Left lung (tissue), 14 donors: ENCODE measurements at regions of chr17 and their contacts with region 1.

Region 1: DNA sequence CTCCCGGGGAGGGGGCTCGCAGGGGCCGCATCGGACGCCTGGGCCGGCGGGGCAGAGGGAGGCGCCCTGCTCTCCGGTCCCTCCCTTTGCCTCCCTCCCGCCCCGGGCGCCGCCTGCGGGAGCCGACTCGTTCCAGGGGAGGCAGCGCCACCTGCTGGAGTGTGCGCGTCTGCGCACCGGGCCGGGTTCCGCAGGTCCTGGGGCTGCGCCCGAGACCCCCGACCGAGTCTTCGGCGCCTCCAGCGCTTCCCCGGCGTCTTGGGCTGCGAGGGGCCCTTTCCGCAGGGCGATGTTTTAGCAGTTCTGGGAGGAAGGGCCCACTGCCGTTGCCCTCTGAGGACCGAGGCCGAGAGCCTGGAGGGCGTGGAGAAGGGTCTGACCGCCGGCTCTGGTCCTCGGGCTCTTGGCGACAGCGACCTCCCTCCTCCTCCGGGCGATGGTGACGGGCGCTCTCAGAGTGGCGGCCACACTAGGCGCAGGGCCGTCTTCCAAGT is 106.3 kb downstream of the SEC14L1 start:
- DNase-seq: peak; percentile 82 to 97 (median 89)
- ATAC-seq: peak; percentile 99
- H3K4me3 ChIP-seq: peak overlapping the region; percentile 44 to 52
- H3K27ac ChIP-seq: peak overlapping the region in 1 of 2 donors; percentile 37
- H3K4me1 ChIP-seq: peaks cover 5 to 12% of the 10 kb centered on the region in 2 donors
- H3K27me3 ChIP-seq: peaks cover 0 to 11% of the 10 kb centered on the region in 2 donors
- CTCF ChIP-seq: peak; percentile 97 to 98

Region 2: DNA sequence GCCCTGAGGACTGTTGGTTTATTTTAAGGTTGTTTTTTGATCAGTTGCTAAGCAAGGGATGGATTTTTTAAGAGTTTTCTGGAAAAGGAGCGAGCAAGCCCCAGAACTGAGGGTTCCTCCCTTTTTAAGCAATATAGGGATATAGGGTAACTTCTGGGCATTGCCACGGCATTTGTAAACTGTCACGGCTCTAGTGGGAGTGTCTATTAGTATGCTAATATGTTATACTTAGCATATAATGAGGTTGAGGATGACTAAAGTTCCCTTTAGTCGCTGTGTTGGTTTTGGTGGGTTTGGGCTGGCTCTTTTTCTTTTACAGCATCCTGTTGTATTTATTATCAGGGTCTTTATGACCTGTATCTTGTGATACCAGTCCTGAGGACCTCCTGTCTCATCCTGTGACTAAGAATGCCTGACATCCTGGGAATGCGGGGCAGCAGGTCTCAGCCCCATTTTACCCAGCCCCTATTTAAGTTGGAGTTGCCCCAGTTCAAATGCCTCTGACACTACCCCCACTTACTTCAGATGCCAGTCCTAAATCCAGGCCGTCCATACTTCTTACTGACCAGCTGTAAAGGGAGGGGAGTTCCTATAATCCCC is 449.8 kb before region 1 on chr17:
- intact Hi-C with region 1: no loop called
- DNase-seq: no peak
- ATAC-seq: no peak
- H3K4me3 ChIP-seq: no peak overlapping the region
- H3K27ac ChIP-seq: no peak overlapping the region
- H3K4me1 ChIP-seq: no peaks in the 10 kb centered on the region
- H3K27me3 ChIP-seq: no peaks in the 10 kb centered on the region
- CTCF ChIP-seq: no peak

Region 3: GRCh38 chr17:77088455-77089123 is 158.5 kb before region 1 on chr17:
- intact Hi-C with region 1: loop called in 1 of 2 experiments (anchors 5 kb)
- DNase-seq: peak; percentile 91 to 98 (median 95)
- ATAC-seq: peak; percentile 91
- H3K4me3 ChIP-seq: peak overlapping the region; percentile 73 to 75
- H3K27ac ChIP-seq: peak overlapping the region; percentile 83 to 89
- H3K4me1 ChIP-seq: peaks cover 7 to 60% of the 10 kb centered on the region in 2 donors
- H3K27me3 ChIP-seq: peaks cover 0 to 14% of the 10 kb centered on the region in 2 donors
- CTCF ChIP-seq: peak; percentile 52 to 73

Region 4: DNA sequence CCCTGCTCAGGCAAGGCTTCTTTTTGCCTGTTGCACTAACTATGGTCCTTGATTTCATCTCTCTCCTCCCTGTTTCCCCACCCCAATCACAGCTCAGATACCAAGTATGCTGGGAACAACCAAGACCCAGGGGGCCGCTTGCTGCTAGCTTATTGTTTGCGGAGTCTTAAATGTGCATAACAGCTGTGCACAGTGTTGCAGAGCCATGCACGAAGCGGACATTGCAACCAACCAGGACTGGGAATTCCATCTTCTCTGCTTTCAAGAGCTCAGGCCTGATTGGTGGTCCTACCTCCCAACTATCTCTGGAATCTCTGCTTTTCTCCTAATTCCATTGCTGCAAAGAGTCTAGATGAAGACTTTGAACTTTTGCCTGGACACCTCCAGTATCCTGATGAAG is 430.1 kb after region 1 on chr17:
- intact Hi-C with region 1: no loop called
- DNase-seq: no peak
- ATAC-seq: no peak
- H3K4me3 ChIP-seq: no peak overlapping the region
- H3K27ac ChIP-seq: no peak overlapping the region
- H3K4me1 ChIP-seq: no peaks in the 10 kb centered on the region
- H3K27me3 ChIP-seq: peaks cover 0 to 50% of the 10 kb centered on the region in 2 donors
- CTCF ChIP-seq: no peak